Posterior vena cava (tissue), 2 donors: ENCODE measurements at regions of chr6 and their contacts with region 1.

Region 1: DNA sequence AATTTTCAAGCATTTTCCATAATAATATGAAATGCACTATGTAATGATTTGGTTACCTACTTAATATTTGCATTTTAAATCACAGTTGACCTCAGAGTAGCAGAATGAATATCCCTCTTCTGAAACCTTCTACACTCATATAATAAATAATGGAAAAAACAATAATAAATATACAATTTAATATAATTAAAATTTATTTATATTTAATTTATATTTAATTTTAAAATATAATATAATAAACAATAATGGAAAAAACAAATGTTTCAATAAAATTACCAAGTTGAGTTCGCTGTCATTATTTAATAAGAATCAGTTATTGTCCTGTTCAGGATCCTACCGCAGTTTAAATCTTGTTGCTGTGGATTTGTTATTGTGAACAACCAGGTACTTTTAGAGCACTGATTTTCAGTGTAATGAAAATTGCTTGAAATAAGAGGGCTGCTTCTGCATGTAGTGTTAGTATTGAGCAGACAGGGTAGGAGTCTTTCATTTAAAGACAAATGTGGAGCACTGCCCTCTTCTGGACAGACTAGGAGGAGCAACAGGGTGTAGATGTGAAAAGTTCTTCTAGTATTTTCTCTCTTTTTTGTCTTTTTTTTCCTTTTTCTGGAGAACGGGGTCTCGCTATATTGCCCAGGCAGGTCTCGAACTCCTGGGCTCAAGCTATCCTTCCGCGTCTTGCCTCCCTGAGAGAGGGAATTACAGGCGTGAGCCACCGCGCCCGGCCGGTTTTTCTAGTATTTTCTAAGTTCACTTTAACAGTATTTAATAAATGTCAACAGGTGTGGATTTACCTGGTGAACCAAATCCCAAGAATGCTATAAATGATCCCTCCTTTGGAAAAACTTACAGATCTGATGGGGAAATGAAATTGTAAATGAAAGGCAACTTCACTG is 13.6 kb downstream of the TRAPPC3L start:
- DNase-seq: no peak

Region 2: DNA sequence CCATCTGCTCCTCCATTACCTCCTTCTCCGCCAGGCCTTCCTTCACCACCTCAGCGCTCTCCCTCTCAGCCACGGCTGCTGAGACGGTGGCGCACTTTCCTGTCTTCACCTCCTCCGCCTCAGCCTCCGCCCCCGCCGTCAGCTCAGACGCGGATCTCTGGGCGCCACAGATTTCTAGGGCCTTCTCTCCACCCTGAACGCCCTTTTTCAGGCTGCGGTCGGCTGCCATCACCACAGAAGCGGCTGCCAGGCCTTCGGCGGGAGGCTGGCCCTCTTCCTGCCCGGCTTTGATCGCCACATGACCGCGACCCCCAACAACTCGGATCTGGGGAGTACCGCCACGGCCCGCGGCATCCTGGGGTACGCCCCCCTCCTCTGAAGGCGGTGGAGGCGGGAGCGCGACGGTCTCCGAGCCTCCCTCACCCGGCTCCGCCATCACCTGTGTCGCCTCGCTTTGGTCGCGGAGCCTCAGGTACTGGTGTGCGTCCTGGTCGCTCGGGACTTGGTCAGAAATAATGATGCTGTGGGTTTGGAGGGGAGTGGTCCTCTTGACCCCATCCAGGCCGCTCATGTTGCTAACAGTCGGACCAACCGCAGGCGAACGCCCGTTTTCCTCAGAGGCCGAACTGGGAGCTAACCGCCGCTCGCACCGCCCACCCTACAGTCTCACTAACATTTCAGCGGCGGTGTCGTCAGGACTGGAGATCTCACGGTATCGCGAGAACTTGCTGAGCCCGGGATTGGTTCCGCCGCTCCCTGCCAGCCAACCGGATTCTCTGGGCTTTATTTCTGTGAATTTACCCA is 252.5 kb before region 1 on chr6 and contains the start of gene TSPYL1:
- intact Hi-C with region 1: loop called in 1 of 2 experiments (anchors 10 kb)
- DNase-seq: peak; percentile 99
- total RNA-seq, gene TSPYL1: 67.7 to 80.3 TPM

Region 3: DNA sequence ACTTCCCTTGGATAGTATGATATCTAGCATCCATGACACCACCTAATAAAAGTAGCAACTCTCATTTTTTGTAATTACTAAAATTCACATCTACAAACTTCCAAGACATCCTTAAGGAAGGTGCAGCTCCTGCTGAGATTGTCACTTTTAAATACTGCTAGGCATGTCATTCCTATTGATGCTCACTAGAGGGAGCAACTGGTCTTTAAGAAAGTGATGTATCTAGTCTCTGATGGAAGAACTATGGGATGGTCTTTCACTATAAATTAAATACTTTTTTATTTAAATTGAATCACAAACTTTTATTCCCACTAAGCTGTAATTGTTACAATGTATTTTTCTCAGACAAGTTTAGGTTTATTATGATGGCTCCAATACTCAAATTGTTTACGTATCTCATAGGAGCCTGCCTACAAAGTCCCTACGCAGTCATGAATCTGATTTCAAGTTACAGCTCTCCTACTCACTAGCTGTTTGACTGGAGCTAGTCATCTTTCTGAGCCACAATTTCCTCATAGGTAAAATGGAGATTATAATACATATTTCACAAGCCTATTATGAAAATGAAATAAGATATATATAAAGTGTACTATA is 244.1 kb before region 1 on chr6:
- intact Hi-C with region 1: loop called in 1 of 2 experiments (anchors 5 kb)
- DNase-seq: no peak

Region 4: DNA sequence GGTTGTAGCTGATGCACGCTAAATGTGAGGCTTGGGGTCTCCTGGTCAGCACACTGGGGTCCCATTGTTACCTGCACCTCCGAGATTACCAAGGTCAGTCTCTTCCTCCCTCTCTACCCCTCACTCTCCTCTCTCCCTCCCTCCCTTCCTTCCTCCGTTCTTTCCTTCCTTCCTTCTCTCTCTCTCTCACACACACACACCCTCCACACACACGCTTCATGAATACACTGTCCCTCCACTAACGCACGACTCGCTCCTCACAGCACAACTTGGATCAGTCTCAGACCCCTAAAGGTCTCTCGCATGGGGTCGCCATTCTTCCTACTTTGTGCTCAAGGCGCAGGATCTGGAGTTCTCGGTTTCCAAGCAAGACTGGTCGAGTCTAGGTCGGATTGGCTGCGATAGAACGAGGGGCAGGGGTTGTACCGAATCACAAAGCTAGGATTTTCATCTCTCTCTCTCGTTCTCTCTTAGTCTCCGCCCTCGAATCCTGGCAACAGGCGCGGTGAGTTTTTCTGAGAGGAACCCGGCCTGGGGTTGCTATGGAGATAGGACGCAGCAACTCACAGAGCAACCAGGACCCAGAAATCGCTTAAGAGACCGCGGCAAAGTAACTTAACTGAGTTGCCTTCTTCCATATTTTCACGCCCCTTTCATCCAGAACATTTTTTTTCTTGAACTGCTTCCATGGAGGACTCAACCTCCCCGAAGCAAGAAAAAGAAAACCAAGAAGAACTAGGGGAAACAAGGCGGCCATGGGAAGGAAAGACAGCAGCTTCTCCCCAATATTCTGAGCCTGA is 84.2 kb after region 1 on chr6 and contains the start of gene RSPH4A:
- intact Hi-C with region 1: no loop called
- DNase-seq: peak; percentile 97
- total RNA-seq, gene RSPH4A: 0.51 to 0.71 TPM